ENCODE measurements at regions of chr9 and their contacts with region 1.

Region 1: DNA sequence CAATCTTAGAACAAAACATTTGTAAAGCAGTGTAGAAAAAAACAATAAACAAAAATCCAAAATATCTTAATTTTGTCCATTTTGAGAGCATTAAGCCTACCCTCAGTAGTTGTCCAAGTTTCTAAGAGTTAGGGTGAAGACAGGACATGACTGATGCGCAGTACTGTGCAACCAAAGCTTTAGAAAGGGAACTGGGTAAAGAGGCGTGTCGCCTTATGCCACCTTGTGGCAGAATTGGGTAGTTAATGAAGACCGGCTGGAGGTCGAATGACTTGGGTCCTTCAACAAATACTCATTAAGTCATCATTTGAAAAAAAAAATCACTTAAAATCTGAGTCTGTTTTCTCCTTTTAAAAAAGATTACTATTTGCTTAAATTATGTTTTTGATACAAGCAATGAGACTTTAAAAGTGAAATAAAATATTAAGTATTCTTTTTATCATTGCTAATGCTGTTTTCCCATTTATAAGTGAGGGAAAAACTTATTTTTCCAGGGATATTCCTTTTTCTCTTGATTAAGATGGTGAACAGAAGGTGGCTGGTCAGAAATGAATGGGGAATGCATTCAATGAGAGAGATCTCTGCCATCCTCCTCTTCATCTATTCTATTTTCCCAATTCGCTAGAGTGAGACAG is 3.5 kb upstream of the RNF20 start:
- DNase-seq: peak; percentile 74
- H3K4me3 Mint-ChIP-seq: no peak overlapping the region
- H3K27ac Mint-ChIP-seq: no peak overlapping the region
- H3K4me1 Mint-ChIP-seq: peaks cover 18% of the 10 kb centered on the region
- H3K27me3 Mint-ChIP-seq: no peaks in the 10 kb centered on the region

Region 2: DNA sequence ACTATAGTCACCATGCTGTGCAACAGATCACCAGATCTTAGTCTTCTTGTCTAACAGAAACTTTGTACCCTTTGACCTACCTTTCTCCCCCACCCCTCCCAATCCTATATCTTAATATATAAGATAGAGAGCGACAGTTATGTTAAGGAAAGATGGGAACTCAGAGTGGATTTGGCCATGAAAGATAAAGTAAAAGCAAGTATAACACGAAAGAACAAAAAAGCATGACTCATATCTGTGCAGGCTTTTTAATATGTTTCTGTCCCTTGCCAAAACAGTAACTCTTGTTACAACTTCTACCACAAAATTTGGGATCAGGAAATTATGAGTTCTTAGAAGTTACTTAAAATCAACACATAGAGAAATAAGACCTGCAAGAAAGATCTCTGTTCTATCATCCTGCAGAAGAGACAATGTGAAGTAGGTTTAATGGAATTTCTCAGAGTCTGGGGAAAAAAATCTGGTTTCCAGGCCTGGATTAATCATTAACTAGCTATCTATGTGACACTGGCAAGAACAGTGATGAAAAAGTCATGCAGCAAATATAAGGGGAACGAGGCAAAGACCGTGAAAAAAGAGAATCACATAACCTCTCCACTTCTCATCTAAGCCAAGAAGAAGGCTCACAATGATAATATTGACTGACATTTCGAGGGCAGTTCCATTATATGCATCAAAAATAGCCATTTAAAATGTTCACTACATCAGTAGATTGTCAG is 164.0 kb before region 1 on chr9:
- CTCF ChIA-PET with region 1: no interaction called
- DNase-seq: no peak
- H3K4me3 Mint-ChIP-seq: no peak overlapping the region
- H3K27ac Mint-ChIP-seq: no peak overlapping the region
- H3K4me1 Mint-ChIP-seq: no peaks in the 10 kb centered on the region
- H3K27me3 Mint-ChIP-seq: no peaks in the 10 kb centered on the region

Region 3: DNA sequence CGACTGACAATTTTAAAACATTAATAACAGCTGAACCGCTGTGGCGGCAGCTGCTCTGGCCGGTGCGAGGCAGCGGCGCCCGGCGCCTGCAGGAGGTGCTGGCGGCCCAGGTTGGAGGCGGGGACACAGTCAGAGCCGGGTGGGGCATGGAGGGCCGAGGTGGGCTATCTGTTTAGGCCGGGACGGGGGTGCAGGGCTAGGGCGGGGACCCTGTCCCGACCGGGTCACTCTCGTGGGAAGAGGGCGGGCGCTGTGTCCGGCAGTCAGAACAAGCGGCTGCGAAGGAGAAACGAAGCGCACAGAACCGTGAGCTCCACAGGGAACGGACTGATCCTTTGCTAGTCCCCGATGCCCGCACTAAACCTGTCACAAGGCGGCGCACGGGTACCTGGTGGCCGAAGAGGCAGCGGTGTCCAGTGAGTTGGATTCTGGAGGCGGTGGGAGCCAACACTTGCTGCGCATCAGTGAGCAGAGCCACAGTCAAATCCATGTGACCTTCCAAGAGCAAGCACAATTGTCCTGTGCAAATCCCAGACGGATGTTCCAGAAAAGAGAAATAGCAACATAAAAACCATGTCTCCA is 81.0 kb before region 1 on chr9:
- CTCF ChIA-PET with region 1: interaction called, 14 read pairs
- DNase-seq: peak; percentile 57
- H3K4me3 Mint-ChIP-seq: peak overlapping the region; percentile 14
- H3K27ac Mint-ChIP-seq: no peak overlapping the region
- H3K4me1 Mint-ChIP-seq: peaks cover 5% of the 10 kb centered on the region
- H3K27me3 Mint-ChIP-seq: peaks cover 45% of the 10 kb centered on the region

Region 4: DNA sequence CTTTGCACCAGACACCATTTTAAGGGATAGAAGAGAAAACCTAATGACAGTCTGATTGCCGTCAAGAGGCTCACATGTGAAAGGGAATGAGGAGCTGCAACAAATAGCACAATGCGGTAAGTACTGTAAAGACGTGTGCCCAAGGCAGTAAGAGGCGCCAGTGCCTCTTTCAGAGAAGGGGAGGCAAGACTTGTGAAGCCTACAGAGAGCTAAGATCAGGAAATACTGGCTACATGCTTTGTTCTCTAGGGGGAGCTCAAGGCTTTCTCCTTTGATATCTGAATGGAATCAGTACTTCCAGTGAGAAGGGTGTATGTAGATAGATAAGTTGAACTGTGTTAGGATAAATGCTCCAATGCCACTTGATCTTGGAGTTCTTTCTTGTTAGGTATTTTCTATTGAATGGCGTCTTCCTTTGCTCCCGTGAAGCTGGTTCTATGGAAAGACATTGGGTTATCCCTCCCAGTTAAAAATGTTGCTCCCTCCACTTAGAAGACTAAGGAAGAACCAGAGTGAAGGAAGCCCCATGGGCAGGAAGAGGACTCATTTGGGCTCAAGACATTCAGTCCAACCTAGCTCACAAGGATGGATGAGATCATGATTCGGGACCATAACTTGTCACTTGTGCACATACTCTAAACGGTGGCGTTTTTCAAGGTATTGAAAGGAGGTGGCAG is 71.1 kb before region 1 on chr9:
- CTCF ChIA-PET with region 1: interaction called, 33 read pairs
- DNase-seq: peak; percentile 29
- H3K4me3 Mint-ChIP-seq: no peak overlapping the region
- H3K27ac Mint-ChIP-seq: no peak overlapping the region
- H3K4me1 Mint-ChIP-seq: no peaks in the 10 kb centered on the region
- H3K27me3 Mint-ChIP-seq: peaks cover 8% of the 10 kb centered on the region

Region 5: GRCh38 chr9:101465392-101465791 is 64.8 kb before region 1 on chr9:
- CTCF ChIA-PET with region 1: interaction called, 10 read pairs
- DNase-seq: no peak
- H3K4me3 Mint-ChIP-seq: no peak overlapping the region
- H3K27ac Mint-ChIP-seq: no peak overlapping the region
- H3K4me1 Mint-ChIP-seq: no peaks in the 10 kb centered on the region
- H3K27me3 Mint-ChIP-seq: peaks cover 23% of the 10 kb centered on the region

Region 6: GRCh38 chr9:101486693-101487442 is 43.3 kb before region 1 on chr9:
- CTCF ChIA-PET with region 1: no interaction called
- DNase-seq: peak; percentile 24
- H3K4me3 Mint-ChIP-seq: peak overlapping the region; percentile 22
- H3K27ac Mint-ChIP-seq: no peak overlapping the region
- H3K4me1 Mint-ChIP-seq: peaks cover 9% of the 10 kb centered on the region
- H3K27me3 Mint-ChIP-seq: peaks cover 54% of the 10 kb centered on the region

Measured in activated naive CD4-positive, alpha-beta T cell treated with anti-CD3 and anti-CD28 coated beads, Interleukin-2, amount 10 ng/mL, durations not matched to agents 7 days and 5 days (primary cell).